A673 (cell line): ENCODE measurements at regions of chr11 and their contacts with region 1.

Region 1: GRCh38 chr11:96794152-96794551 is 404.3 kb downstream of the JRKL start:
- DNase-seq: peak; percentile 73
- H3K4me3 ChIP-seq: no peak overlapping the region
- H3K27ac ChIP-seq: no peak overlapping the region
- H3K4me1 ChIP-seq: peaks cover 8% of the 10 kb centered on the region
- H3K27me3 ChIP-seq: peaks cover 4% of the 10 kb centered on the region
- CTCF ChIP-seq: peak; percentile 56

Region 2: DNA sequence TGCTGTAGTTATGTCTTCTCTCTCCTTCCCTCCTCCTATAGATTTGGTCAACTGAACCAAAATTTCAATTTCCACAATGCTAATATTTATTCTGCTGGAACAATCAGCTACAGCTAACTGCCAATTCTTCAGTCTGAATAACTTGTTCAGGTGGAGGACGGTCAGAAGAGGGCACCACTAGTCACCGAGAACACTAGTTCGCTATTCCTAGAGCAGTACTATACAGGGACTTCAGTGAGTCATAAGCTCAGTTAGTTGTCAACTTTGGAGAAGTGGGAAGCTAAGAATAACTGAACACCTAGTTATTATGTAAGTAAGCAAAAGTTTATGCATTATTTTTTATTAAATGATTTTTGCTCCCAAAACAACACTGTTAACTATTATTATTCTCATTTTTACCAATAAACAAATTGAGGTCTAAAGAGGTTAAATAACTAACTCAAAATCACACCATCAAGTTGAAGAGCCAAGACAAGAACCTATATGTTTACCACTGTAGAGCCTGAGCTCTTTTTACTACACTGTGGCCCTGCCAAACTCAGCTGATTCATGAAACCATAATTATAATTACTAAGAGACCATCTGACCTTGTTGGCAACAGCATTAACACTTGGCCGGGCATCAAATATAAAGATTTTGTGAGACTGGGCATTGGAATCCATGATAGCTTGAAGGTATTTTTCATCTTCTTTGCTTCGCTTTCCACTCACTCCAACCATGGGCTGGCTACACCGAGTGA is 944.9 kb before region 1 on chr11:
- CTCF ChIA-PET with region 1: no interaction called
- POLR2A ChIA-PET with region 1: no interaction called
- intact Hi-C with region 1: no loop called
- DNase-seq: peak; percentile 77
- H3K4me3 ChIP-seq: no peak overlapping the region
- H3K27ac ChIP-seq: no peak overlapping the region
- H3K4me1 ChIP-seq: no peaks in the 10 kb centered on the region
- H3K27me3 ChIP-seq: no peaks in the 10 kb centered on the region
- CTCF ChIP-seq: peak; percentile 66

Region 3: DNA sequence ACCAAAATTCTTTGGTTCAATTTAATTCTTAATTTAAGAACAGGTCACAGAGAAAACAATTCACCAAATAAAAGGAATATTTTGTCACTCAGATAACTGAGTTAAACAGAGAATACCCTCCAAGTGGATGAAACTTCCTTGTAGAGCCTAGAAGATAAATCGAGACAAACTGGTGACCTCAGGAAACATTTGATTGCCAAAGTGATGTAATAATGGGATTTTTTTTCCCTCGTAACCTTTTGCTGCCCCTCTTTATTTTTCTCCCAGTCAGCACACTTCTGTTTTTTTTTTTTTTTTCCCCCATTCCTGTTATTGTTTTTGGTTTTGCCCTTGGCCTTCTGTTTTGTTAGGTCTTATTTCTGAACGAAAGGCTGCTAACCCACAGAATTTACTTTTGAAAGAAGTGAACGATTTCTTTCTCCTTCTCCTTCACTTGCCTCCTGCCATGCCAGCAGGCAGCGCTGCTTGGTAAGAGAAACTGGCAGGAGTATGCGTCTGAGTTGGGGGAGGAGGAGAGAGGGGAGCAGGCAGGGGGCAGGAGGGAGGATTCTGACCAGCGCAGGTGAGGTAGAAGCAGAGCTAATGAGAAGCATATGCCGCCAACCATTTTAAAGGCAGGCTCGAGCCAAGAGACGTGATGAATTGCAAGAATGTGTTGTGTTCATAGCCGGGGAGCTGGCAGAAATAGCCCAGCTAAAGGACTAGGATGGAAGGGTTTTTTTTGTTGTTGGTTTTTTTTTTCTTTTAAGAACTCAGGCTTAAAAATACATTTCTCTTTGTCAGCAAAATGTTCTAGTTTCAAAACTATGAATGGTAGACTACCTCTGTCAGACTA is 748.3 kb before region 1 on chr11:
- CTCF ChIA-PET with region 1: no interaction called
- POLR2A ChIA-PET with region 1: interaction called, 11 read pairs
- intact Hi-C with region 1: no loop called
- DNase-seq: no peak
- H3K4me3 ChIP-seq: no peak overlapping the region
- H3K27ac ChIP-seq: no peak overlapping the region
- H3K4me1 ChIP-seq: no peaks in the 10 kb centered on the region
- H3K27me3 ChIP-seq: no peaks in the 10 kb centered on the region
- CTCF ChIP-seq: 0 out of 2 replicates have a peak, but pooled peaks have one; percentile 19

Region 4: DNA sequence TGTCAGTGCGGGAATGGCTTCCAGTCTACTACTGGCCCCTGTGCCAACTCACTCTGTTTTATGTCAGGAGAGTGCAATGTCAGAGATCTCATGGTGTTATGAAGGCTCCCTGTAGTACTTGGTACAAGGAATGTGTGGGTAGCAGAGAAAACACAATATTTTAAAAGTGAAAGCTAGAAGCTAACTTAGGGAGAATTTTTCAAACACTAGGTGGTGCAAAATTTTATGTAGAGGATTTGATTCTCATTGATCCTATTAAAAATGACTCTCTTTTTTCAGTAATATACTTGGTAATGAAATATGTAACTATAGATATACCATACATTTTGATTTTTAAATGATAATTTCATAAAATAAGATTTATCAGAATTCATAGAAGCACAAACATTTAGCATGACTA is 269.7 kb before region 1 on chr11:
- CTCF ChIA-PET with region 1: no interaction called
- POLR2A ChIA-PET with region 1: no interaction called
- intact Hi-C with region 1: loop called (anchors 10 kb)
- DNase-seq: no peak
- H3K4me3 ChIP-seq: no peak overlapping the region
- H3K27ac ChIP-seq: no peak overlapping the region
- H3K4me1 ChIP-seq: no peaks in the 10 kb centered on the region
- H3K27me3 ChIP-seq: no peaks in the 10 kb centered on the region
- CTCF ChIP-seq: peak; percentile 48; the same call in 1 of the 2 replicates

Region 5: DNA sequence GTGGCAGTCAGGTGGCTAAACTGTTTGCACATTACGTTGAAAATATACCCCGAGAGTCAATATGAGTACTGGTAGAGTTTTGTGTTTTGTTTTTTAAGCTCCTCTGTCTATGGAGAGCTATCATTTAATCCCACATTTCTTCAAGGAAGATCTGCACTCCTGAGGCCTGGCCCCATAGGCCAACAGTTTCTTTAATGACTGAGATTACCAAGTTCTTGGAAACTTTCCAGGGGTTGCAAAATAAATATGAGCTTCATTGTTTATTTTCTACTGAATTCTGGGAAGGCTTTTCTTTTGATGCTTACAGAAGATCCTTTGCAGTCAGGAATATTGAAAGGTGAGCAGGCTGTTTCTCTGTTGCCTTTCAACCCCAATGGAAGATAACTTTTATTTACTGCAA is 47.6 kb after region 1 on chr11:
- CTCF ChIA-PET with region 1: no interaction called
- POLR2A ChIA-PET with region 1: no interaction called
- intact Hi-C with region 1: no loop called
- DNase-seq: peak; percentile 9
- H3K4me3 ChIP-seq: no peak overlapping the region
- H3K27ac ChIP-seq: no peak overlapping the region
- H3K4me1 ChIP-seq: no peaks in the 10 kb centered on the region
- H3K27me3 ChIP-seq: no peaks in the 10 kb centered on the region
- CTCF ChIP-seq: no peak